Activated CD8-positive, alpha-beta T cell treated with anti-CD3 and anti-CD28 coated beads for 36 hours (primary cell): ENCODE measurements at regions of chr17 and their contacts with region 1.

Region 1: GRCh38 chr17:64491034-64491859 is 5.6 kb downstream of the POLG2 start:
- DNase-seq: peak; percentile 72
- ATAC-seq: peak; percentile 82
- H3K4me3 Mint-ChIP-seq: no peak overlapping the region
- H3K27ac Mint-ChIP-seq: no peak overlapping the region
- H3K4me1 Mint-ChIP-seq: peaks cover 25% of the 10 kb centered on the region
- H3K27me3 Mint-ChIP-seq: no peaks in the 10 kb centered on the region
- CTCF ChIP-seq: peak; percentile 74

Region 2: GRCh38 chr17:64426568-64426967 is 64.7 kb before region 1 on chr17:
- CTCF ChIA-PET with region 1: interaction called, 178 read pairs
- POLR2A ChIA-PET with region 1: no interaction called
- intact Hi-C with region 1: loop called (anchors 5 kb)
- DNase-seq: no peak
- ATAC-seq: no peak
- H3K4me3 Mint-ChIP-seq: no peak overlapping the region
- H3K27ac Mint-ChIP-seq: no peak overlapping the region
- H3K4me1 Mint-ChIP-seq: no peaks in the 10 kb centered on the region
- H3K27me3 Mint-ChIP-seq: no peaks in the 10 kb centered on the region
- CTCF ChIP-seq: no peak

Region 3: DNA sequence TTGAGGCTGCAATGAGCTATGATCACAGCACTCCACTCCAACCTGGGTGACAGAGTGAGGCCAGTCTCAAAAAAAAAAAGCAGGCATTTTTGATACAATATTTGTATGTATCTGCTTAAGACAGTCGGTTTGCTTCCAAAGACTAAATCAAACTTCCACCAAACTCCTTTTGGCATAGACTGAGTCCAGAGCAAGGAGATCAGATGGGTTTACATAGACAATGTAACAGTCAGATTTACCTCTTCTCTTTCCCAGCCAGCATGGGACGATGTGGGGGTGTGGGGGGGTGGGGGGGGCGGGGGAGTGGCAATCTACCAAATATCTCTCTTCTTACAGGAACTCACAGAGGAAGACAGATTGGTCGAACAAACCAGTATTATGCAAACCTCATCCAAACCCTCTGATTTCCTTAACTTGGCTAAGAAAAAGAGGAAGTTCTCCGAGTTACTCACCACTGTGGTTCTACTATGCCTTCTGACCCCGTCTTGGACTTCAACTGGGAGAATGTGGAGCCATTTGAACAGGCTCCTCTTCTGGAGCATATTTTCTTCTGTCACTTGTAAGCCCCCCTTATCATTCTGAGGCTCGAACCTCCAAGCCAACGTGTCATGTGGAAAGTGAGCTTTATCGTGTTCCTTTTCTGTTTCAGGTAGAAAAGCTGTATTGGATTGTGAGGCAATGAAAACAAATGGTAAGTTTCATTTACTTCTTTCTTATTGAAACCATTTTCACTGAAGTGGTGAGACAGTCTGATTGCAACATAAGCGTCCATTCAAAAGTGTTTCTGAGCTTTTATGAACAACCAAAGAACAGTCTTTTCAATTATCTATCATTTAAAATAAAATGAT is 42.4 kb before region 1 on chr17 and contains the start of gene MILR1:
- CTCF ChIA-PET with region 1: interaction called, 13 read pairs
- POLR2A ChIA-PET with region 1: no interaction called
- intact Hi-C with region 1: no loop called
- DNase-seq: no peak
- ATAC-seq: no peak
- H3K4me3 Mint-ChIP-seq: no peak within 1 kb of the TSS
- H3K27ac Mint-ChIP-seq: no peak within 1 kb of the TSS
- H3K4me1 Mint-ChIP-seq: peaks cover 6% of the 10 kb centered on the region
- H3K27me3 Mint-ChIP-seq: no peaks in the 10 kb centered on the region
- CTCF ChIP-seq: no peak
- total RNA-seq, gene MILR1: 1.3 to 2.3 TPM

Region 4: DNA sequence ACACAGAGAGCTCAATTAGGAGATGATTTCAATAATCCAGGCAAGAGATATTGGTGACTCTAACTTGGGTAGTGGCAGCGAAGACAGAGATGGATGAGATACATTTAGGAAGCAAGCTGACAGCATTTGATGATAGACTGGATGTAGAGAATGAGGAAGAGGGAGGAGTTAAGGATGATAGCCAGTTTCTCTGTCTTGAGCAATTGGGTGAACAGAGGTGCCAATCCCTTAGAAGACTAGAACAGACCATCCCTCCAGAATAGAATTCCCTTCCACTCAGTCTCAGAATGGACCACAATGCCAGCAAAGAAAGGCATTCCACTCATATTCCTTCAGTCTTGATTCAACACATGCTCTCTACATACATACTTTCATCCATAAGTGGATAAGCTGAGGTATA is 11.6 kb before region 1 on chr17:
- CTCF ChIA-PET with region 1: interaction called, 41 read pairs
- POLR2A ChIA-PET with region 1: interaction called, 20 read pairs
- intact Hi-C with region 1: no loop called
- DNase-seq: no peak
- ATAC-seq: no peak
- H3K4me3 Mint-ChIP-seq: no peak overlapping the region
- H3K27ac Mint-ChIP-seq: no peak overlapping the region
- H3K4me1 Mint-ChIP-seq: no peaks in the 10 kb centered on the region
- H3K27me3 Mint-ChIP-seq: no peaks in the 10 kb centered on the region
- CTCF ChIP-seq: no peak

Region 5: DNA sequence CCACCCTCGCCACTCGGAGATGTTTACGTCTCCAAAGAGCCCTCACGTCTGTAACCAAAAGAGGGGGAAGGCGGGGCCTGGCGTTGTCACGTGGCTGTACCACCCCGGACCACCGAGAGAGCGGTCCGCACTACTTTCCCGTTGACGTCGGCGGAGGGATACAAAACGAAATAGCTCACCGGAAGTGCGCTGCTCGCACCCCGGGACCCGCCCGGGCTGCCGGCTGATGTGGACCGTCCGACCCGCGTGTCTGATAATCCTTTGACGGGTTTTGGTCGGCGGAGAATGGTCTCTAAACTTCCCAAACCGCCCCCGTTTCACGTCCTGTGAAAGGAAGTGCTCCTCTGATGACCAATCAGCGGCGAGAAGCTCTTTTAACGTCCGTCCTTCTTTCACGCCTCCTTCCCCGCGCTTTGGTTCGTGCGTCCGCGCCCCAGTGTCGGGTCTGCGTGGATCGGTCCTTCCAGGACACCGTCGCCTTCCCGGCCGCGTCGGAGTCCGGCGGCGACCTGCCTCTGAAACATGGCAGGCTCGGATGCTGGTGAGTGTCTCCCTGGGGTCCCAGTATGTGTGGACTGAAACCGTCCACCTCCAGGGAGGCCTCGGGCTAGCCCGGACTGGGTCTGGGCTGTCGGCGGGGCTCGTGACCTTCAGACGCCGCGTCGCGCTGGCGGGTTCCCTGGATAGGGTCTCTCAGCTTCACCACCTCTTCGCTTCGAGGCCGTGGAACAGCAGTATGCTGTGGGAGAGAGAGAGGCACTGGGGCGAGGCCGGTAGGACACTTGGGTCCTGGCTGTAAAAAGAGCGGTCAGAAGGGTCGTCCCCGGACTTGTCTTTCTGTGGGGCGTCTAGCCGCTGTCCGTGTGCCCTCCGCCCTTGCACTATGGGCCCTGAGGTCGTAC is 15.6 kb after region 1 on chr17 and contains the start of gene CEP95:
- CTCF ChIA-PET with region 1: interaction called, 32 read pairs
- POLR2A ChIA-PET with region 1: interaction called, 143 read pairs
- intact Hi-C with region 1: no loop called
- DNase-seq: peak; percentile 98
- ATAC-seq: peak; percentile 70
- H3K4me3 Mint-ChIP-seq: peak within 1 kb of the TSS; percentile 91
- H3K27ac Mint-ChIP-seq: peak within 1 kb of the TSS; percentile 99
- H3K4me1 Mint-ChIP-seq: peaks cover 53% of the 10 kb centered on the region
- H3K27me3 Mint-ChIP-seq: no peaks in the 10 kb centered on the region
- CTCF ChIP-seq: no peak
- total RNA-seq, gene CEP95: 45.2 to 45.7 TPM